ENCODE measurements at regions of chr3 and their contacts with region 1.

Region 1: DNA sequence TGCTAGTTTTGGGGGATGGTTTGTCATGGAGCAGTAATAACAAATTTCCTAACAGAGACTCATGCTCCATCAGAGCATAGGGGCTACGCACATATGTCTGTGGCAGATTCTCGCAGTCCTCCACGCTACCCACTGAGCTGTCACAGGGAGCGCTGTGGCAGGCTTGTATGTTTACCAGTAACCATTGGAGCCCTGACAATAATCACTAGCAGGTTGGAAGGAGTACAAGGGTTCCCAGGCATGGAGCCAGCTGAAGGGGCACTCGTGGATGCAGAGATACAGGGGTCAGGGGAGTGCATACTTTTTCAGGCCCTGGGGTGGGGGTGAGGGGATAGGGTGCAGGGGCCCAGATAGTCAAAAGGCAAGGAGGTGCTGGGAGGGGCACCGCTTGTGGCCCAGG is 7.9 kb upstream of the GP9 start:
- DNase-seq: no peak
- H3K4me3 Mint-ChIP-seq: no peak overlapping the region
- H3K27ac Mint-ChIP-seq: no peak overlapping the region
- H3K4me1 Mint-ChIP-seq: peaks cover 8% of the 10 kb centered on the region
- H3K27me3 Mint-ChIP-seq: peaks cover 10% of the 10 kb centered on the region

Region 2: GRCh38 chr3:128438488-128439072 is 614.1 kb before region 1 on chr3:
- CTCF ChIA-PET with region 1: no interaction called
- POLR2A ChIA-PET with region 1: no interaction called
- DNase-seq: no peak
- H3K4me3 Mint-ChIP-seq: no peak overlapping the region
- H3K27ac Mint-ChIP-seq: no peak overlapping the region
- H3K4me1 Mint-ChIP-seq: no peaks in the 10 kb centered on the region
- H3K27me3 Mint-ChIP-seq: peaks cover 28% of the 10 kb centered on the region

Region 3: GRCh38 chr3:128665362-128666038 is 387.2 kb before region 1 on chr3:
- CTCF ChIA-PET with region 1: no interaction called
- POLR2A ChIA-PET with region 1: no interaction called
- DNase-seq: no peak
- H3K4me3 Mint-ChIP-seq: no peak overlapping the region
- H3K27ac Mint-ChIP-seq: no peak overlapping the region
- H3K4me1 Mint-ChIP-seq: peaks cover 1% of the 10 kb centered on the region
- H3K27me3 Mint-ChIP-seq: peaks cover 16% of the 10 kb centered on the region

Region 4: GRCh38 chr3:128950223-128950938 is 102.3 kb before region 1 on chr3:
- CTCF ChIA-PET with region 1: no interaction called
- POLR2A ChIA-PET with region 1: no interaction called
- DNase-seq: peak; percentile 40
- H3K4me3 Mint-ChIP-seq: no peak overlapping the region
- H3K27ac Mint-ChIP-seq: no peak overlapping the region
- H3K4me1 Mint-ChIP-seq: no peaks in the 10 kb centered on the region
- H3K27me3 Mint-ChIP-seq: peaks cover 8% of the 10 kb centered on the region

Region 5: GRCh38 chr3:128969993-128970739 is 82.5 kb before region 1 on chr3:
- CTCF ChIA-PET with region 1: interaction called, 11 read pairs
- POLR2A ChIA-PET with region 1: no interaction called
- DNase-seq: peak; percentile 76
- H3K4me3 Mint-ChIP-seq: no peak overlapping the region
- H3K27ac Mint-ChIP-seq: no peak overlapping the region
- H3K4me1 Mint-ChIP-seq: peaks cover 13% of the 10 kb centered on the region
- H3K27me3 Mint-ChIP-seq: peaks cover 4% of the 10 kb centered on the region

Region 6: DNA sequence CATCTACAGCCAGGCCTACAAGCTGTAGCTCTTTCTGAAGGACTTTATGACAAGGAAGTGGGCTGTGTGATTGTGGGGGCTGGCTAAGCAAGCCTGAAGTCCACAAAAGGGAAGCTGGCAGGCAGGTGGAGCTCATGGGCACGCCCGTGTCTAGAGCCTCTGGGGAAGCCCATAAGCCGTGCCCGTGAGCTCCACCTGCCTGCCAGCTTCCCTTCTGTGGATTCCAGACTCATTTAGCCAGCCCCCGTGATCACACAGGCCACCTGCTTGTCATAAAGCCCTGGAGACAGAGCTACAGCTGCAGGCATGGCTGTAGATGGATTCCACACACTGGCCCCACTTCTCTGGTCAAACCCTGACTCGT is 36.3 kb before region 1 on chr3:
- CTCF ChIA-PET with region 1: interaction called, 14 read pairs
- POLR2A ChIA-PET with region 1: no interaction called
- DNase-seq: peak; percentile 69
- H3K4me3 Mint-ChIP-seq: peak overlapping the region; percentile 70
- H3K27ac Mint-ChIP-seq: peak overlapping the region; percentile 98
- H3K4me1 Mint-ChIP-seq: peaks cover 37% of the 10 kb centered on the region
- H3K27me3 Mint-ChIP-seq: no peaks in the 10 kb centered on the region

Region 7: GRCh38 chr3:129026728-129027543 is 25.7 kb before region 1 on chr3:
- CTCF ChIA-PET with region 1: interaction called, 41 read pairs
- POLR2A ChIA-PET with region 1: no interaction called
- DNase-seq: peak; percentile 95
- H3K4me3 Mint-ChIP-seq: peak overlapping the region; percentile 75
- H3K27ac Mint-ChIP-seq: peak overlapping the region; percentile 94
- H3K4me1 Mint-ChIP-seq: peaks cover 17% of the 10 kb centered on the region
- H3K27me3 Mint-ChIP-seq: no peaks in the 10 kb centered on the region

Region 8: DNA sequence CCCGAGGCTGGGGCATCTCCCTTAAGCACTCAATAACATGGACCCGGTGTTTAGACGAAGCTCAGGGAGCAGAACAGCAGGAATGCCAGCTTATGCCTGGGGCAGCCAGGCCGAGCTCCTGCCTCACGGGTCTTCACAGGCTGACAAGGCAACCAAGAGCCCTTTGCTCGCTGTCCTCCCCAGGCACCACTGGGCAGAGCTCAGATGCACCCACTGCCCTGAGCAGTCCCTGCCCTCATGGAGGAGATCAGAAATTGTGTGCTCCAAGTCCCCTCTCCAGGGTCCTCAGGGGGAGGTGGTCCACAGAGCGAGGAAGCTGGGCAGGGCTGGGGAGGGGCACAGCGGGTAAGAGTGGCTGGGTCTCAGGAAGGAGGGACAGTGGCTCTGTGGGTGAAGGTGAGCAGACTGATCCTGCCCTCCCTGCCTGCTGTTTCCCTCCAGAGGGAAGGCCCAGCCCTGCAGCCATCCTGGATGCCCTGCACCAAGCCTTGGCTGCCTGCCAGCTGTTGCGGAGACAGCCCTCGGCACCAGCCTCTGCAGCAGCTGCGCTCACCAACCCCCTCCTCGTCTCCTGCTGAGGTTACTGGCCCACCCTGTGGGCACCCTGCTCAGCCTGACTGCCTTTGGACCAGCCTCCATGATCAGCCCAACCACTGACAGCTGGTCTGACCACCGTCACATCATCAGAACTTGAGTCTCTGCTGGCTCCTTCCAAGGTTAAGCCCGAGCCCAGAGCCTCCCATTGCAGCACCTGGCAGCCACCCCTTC is 13.2 kb before region 1 on chr3:
- CTCF ChIA-PET with region 1: interaction called, 24 read pairs
- POLR2A ChIA-PET with region 1: no interaction called
- DNase-seq: no peak
- H3K4me3 Mint-ChIP-seq: no peak overlapping the region
- H3K27ac Mint-ChIP-seq: no peak overlapping the region
- H3K4me1 Mint-ChIP-seq: peaks cover 17% of the 10 kb centered on the region
- H3K27me3 Mint-ChIP-seq: peaks cover 31% of the 10 kb centered on the region

Region 9: GRCh38 chr3:129068291-129068886 is 15.7 kb after region 1 on chr3:
- CTCF ChIA-PET with region 1: interaction called, 83 read pairs
- POLR2A ChIA-PET with region 1: no interaction called
- DNase-seq: no peak
- H3K4me3 Mint-ChIP-seq: peak overlapping the region; percentile 63
- H3K27ac Mint-ChIP-seq: no peak overlapping the region
- H3K4me1 Mint-ChIP-seq: peaks cover 16% of the 10 kb centered on the region
- H3K27me3 Mint-ChIP-seq: peaks cover 6% of the 10 kb centered on the region

Region 10: GRCh38 chr3:129120254-129121004 is 67.8 kb after region 1 on chr3:
- CTCF ChIA-PET with region 1: interaction called, 13 read pairs
- POLR2A ChIA-PET with region 1: interaction called, 3 read pairs
- DNase-seq: peak; percentile 97
- H3K4me3 Mint-ChIP-seq: peak overlapping the region; percentile 92
- H3K27ac Mint-ChIP-seq: peak overlapping the region; percentile 98
- H3K4me1 Mint-ChIP-seq: peaks cover 49% of the 10 kb centered on the region
- H3K27me3 Mint-ChIP-seq: no peaks in the 10 kb centered on the region

Region 11: DNA sequence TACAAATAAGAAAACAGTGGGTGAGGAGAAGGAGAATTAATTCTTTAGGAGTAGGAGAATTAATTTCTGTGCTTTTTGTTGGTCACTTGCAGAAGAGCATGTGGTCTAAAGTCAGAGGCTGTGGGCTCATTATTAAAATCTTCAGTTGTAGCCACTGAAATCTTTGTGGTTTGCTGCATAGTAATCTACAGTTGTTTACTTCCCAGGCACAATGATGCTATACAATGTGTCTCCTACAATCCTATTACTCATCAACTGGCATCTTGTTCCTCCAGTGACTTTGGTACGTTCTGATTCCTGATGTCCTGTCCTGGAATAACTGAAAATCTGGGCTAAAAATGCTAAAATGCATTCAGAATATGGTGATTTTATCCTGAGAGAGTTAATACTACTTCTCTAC is 408.3 kb after region 1 on chr3:
- CTCF ChIA-PET with region 1: no interaction called
- POLR2A ChIA-PET with region 1: no interaction called
- DNase-seq: no peak
- H3K4me3 Mint-ChIP-seq: no peak overlapping the region
- H3K27ac Mint-ChIP-seq: no peak overlapping the region
- H3K4me1 Mint-ChIP-seq: peaks cover 9% of the 10 kb centered on the region
- H3K27me3 Mint-ChIP-seq: no peaks in the 10 kb centered on the region